Esophagus squamous epithelium (tissue), 5 donors: ENCODE measurements at regions of chr1 and their contacts with region 1.

Region 1: DNA sequence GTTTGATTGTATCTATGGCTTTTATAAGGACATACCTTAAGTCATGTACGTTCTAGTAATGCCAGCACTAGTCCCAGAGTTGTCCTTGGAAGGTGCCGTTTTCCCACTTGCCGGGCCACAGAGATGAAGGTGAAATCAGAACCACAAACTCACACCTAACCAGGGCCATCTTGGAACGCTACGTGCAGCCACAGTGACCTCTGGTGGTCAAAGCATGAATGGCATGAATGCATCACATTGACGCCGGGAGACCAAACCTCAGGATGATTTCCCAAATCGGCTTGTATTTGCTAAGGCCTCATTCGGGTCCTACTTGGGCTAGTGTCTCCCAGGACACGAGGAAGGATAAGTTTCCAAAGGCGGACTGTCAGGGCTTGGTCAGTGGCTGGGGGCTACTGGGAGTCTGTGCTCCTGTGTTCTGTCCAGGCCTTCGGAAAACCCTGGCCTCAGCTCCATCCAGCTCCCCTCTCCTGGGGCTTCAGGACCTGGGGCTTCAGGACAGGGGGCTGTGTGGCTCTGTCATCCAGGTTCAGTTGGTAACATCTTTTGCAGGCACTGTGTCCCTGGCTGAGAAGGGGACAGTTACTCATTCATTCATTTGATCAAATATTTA is 260.5 kb downstream of the PRDM2 start:
- DNase-seq: no peak
- H3K4me3 ChIP-seq: no peak overlapping the region
- H3K27ac ChIP-seq: no peak overlapping the region
- H3K4me1 ChIP-seq: peaks cover 0 to under 1% (median 0%) of the 10 kb centered on the region in 3 donors
- H3K27me3 ChIP-seq: peaks cover 0 to 38% (median 0%) of the 10 kb centered on the region in 4 donors
- CTCF ChIP-seq: peak; percentile 92 to 97 (median 96)
- POLR2A ChIP-seq: no peak

Region 2: DNA sequence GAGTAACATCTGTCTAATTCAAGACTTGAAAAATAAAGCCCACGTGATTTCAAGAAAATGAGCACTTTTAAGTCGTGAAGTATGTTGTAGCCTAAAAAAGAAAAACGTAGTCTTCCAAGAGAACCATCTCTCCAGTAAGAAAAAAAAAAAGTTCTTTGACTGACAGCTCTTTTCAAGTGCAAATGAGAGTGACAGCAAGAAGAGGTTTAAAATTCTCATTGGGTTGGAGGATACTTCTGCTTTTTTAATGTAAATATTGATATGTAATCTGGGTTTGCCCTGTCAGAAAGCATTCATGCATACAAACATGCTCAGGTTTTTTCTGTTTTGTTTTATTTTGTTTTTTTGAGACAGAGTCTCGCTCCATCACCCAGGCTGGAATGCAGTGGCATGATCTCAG is 292.8 kb before region 1 on chr1:
- intact Hi-C with region 1: loop called (anchors 2 kb)
- DNase-seq: no peak
- H3K4me3 ChIP-seq: no peak overlapping the region
- H3K27ac ChIP-seq: no peak overlapping the region
- H3K4me1 ChIP-seq: peaks cover 4 to 37% (median 15%) of the 10 kb centered on the region in 3 donors
- H3K27me3 ChIP-seq: no peaks in the 10 kb centered on the region
- CTCF ChIP-seq: no peak
- POLR2A ChIP-seq: no peak

Region 3: GRCh38 chr1:13679651-13680050 is 280.8 kb before region 1 on chr1:
- intact Hi-C with region 1: no loop called
- DNase-seq: no peak
- H3K4me3 ChIP-seq: no peak overlapping the region
- H3K27ac ChIP-seq: no peak overlapping the region
- H3K4me1 ChIP-seq: peaks cover 0 to 6% (median 0%) of the 10 kb centered on the region in 3 donors
- H3K27me3 ChIP-seq: peaks cover 0 to 15% (median 0%) of the 10 kb centered on the region in 4 donors
- CTCF ChIP-seq: no peak
- POLR2A ChIP-seq: no peak

Region 4: DNA sequence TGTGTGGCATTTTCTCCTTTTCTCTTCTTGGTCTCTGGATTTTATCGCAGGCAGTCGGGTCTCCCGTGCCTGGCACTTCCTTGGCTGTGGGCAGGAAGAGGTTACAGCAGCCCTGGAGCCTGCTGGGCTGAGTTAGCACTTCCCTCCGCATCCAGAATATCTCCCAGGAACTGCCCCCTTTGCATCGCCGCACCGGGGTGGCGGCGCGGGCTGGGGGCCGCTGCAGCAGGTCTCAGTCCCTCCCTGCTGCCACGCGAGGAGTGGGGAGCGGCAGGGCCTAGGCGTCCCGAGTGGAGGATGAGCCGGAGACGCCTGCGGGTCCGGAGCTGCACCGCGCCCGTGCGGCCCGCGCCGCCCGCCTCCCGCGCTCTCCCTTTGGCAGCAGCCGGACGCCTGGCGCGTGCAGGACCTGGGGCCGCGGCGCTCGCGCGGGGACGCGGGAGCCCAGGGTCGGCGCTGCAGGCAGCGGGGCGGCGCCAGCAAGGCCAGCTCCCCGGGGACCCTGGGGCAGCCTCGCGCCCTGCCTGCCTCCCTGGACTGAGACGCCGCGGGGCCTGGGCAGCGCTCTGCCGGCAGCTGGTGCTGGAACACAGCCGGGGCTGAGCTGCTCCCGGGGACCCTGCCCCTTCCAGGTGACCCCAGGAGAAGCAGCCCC is 67.7 kb before region 1 on chr1:
- intact Hi-C with region 1: no loop called
- DNase-seq: no peak
- H3K4me3 ChIP-seq: peak overlapping the region; percentile 11 to 62 (median 38)
- H3K27ac ChIP-seq: no peak overlapping the region
- H3K4me1 ChIP-seq: peaks cover 0 to 14% (median 9%) of the 10 kb centered on the region in 3 donors
- H3K27me3 ChIP-seq: peaks cover 0 to 97% (median 5%) of the 10 kb centered on the region in 4 donors
- CTCF ChIP-seq: no peak
- POLR2A ChIP-seq: no peak

Region 5: DNA sequence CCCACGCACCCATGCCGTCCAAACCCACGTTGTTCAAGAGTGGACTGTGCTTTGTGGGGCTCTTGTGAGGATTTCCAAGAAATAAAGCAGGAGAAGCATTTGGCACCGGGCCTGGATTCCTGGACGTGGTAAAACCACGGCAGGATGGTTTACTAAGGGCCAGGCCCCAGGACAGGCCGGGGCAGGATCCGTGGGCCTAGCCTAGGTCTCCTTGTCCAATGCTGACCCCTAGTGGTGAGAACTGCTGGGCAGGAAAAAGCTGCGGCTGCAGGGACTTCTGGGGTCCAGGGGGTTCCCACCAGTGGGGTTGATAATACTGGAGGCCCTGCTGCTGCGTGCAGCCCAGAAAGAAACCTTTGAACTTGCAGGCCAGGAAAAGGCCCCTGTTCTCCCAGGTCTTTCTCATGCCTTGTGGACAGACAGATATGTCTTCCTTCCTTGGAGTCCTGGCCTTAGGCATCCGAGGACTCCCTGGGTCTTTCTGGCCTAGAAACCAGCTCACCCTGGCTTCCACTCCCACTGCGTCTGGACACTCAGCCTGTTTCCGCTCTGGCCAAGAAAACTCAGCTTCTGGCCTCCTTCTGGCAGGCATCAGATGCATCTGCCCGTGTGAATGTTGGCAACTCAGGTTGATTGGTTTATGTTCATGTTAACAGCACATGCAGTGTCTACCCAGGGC is 1086.1 kb after region 1 on chr1:
- intact Hi-C with region 1: loop called (anchors 10 kb)
- DNase-seq: no peak
- H3K4me3 ChIP-seq: no peak overlapping the region
- H3K27ac ChIP-seq: no peak overlapping the region
- H3K4me1 ChIP-seq: peaks cover 0 to 8% (median 3%) of the 10 kb centered on the region in 3 donors
- H3K27me3 ChIP-seq: no peaks in the 10 kb centered on the region
- CTCF ChIP-seq: peak; percentile 57 to 95 (median 88)
- POLR2A ChIP-seq: no peak